ENCODE measurements at regions of chr9 and their contacts with region 1.

Region 1: DNA sequence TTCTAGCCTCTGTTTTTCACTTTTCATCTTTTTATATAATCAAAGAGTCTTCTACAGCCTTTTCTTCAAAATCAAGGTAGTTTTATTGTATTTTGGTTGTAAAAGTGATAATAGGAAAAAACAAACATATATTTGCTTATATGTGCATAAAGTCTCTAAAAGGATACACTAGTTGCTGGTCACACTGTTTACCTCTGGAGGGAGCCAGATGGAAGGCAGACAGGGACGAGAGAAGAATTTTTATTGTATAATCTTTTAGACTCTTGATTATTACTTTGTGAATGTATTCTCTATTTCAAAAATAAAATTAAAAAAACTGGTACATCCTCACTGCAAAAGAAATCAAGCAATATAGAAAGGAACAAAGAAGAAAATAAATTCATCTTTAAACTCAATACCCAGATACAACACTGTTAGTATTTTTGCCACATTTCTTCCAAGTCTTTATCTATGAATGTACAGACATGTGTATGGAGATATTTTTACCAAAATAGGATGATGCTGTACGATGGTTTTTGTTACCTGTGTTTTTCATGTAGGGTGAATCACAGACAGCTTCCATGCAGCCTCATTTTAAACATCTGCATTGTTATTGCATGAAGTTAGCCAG is 6.1 kb upstream of the RNF183 start:
- DNase-seq: peak; percentile 10
- H3K4me3 ChIP-seq: no peak overlapping the region
- H3K27ac ChIP-seq: no peak overlapping the region
- H3K27me3 ChIP-seq: peaks cover 4% of the 10 kb centered on the region
- CTCF ChIP-seq: peak; percentile 82

Region 2: DNA sequence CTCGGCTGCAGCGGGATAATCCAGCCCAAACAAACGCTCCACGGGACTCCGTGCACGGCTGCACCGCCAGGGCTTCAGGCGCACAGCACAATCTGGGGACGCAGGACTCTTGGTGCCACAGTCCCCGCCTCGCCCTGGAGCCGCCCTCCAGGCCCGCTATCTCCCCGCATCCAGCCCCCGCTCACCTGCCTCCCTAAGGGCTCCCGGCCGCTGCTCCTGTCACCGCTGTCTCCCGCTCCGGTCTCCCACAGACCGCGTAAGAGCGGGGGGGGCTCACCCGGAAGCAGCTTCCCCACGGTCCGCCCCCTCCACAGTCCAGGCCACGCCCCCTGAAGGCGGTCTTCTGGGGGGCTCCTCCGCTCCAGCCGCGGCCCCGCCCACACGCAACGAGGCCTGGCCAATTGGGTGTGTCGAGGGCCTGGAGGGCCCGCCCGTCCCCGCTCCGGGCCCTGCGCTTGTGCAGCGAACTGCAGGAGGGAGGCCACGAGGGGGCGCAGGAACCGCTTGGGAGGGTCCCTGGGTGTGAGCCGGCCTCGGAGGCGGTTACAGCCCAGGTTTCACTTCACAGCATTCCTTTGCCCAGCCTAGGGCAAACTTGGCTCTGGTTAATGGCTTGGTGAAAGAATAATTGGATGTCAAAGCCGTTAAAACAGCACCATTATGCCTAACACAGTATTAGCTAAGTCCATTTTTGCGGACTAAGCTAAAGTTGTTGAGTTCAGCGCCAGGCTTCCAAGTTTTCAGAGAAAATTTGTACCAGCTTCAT is 91.9 kb after region 1 on chr9 and contains the start of gene ALAD:
- CTCF ChIA-PET with region 1: interaction called, 30 read pairs
- POLR2A ChIA-PET with region 1: no interaction called
- DNase-seq: peak; percentile 94
- H3K4me3 ChIP-seq: peak within 1 kb of the TSS; percentile 94
- H3K27ac ChIP-seq: peak within 1 kb of the TSS; percentile 39
- H3K27me3 ChIP-seq: no peaks in the 10 kb centered on the region
- CTCF ChIP-seq: peak; percentile 90
- polyA plus RNA-seq, gene ALAD: 11.8 and 15.9 TPM in 2 replicates

Region 3: GRCh38 chr9:113452113-113452605 is 142.8 kb after region 1 on chr9:
- CTCF ChIA-PET with region 1: no interaction called
- POLR2A ChIA-PET with region 1: no interaction called
- DNase-seq: no peak
- H3K4me3 ChIP-seq: no peak overlapping the region
- H3K27ac ChIP-seq: no peak overlapping the region
- H3K27me3 ChIP-seq: no peaks in the 10 kb centered on the region
- CTCF ChIP-seq: no peak

Measured in AG04450 (cell line).